GM12878 (cell line): ENCODE measurements at regions of chr12 and their contacts with region 1.

Region 1: GRCh38 chr12:28190321-28191050 is at the start of gene CCDC91:
- DNase-seq: peak; percentile 60
- ATAC-seq: peak; percentile 94
- H3K4me3 ChIP-seq: peak within 1 kb of the TSS; percentile 76
- H3K27ac ChIP-seq: peak within 1 kb of the TSS; percentile 95
- H3K4me1 ChIP-seq: peaks cover 4% of the 10 kb centered on the region; the same call in 1 of the 2 replicates
- H3K27me3 ChIP-seq: no peaks in the 10 kb centered on the region
- CTCF ChIP-seq: no peak
- EP300 ChIP-seq: no peak
- POLR2A ChIP-seq: peak; percentile 94
- RAD21 ChIP-seq: no peak
- polyA plus RNA-seq, gene CCDC91: 6.1 to 10.3 TPM

Region 2: DNA sequence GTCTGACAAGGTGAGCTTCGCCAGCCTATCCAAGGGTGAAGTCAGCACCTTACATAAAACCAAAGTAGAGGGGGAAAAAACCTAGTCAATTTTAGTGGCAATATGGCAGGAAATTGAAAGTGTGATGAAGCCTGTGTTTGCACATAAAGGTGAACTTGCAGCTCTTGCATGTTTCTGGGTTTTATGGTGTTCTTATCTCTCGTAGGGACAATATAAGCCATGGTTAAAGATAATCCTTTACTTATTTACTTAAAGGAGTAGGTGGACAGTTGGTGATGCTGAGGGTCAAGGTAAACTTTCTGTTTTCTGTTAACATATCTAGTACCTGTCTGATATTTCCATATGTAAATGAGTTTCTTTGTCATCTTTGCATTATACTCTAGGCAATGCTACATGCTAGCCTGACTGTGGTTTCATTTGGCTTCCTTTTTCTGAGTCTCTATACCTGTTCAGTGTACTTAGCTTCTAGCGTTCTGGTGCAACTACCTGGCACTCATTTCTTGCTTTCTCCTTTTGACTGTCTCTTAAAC is 32.6 kb after region 1 on chr12:
- CTCF ChIA-PET with region 1: interaction called, 3 read pairs
- POLR2A ChIA-PET with region 1: interaction called, 7 read pairs
- RAD21 ChIA-PET with region 1: no interaction called
- SMC1A ChIA-PET with region 1: interaction called, 3 read pairs
- in situ Hi-C with region 1: no loop called
- intact Hi-C with region 1: loop called (anchors 2 kb)
- DNase-seq: no peak
- ATAC-seq: peak; percentile 93
- H3K4me3 ChIP-seq: 0 out of 2 replicates have a peak overlapping the region, but pooled peaks have one; percentile 5
- H3K27ac ChIP-seq: no peak overlapping the region; the same call in 1 of the 2 replicates
- H3K4me1 ChIP-seq: peaks cover 19% of the 10 kb centered on the region; the same call in 1 of the 2 replicates
- H3K27me3 ChIP-seq: no peaks in the 10 kb centered on the region
- CTCF ChIP-seq: no peak
- EP300 ChIP-seq: no peak
- POLR2A ChIP-seq: no peak
- RAD21 ChIP-seq: no peak

Region 3: DNA sequence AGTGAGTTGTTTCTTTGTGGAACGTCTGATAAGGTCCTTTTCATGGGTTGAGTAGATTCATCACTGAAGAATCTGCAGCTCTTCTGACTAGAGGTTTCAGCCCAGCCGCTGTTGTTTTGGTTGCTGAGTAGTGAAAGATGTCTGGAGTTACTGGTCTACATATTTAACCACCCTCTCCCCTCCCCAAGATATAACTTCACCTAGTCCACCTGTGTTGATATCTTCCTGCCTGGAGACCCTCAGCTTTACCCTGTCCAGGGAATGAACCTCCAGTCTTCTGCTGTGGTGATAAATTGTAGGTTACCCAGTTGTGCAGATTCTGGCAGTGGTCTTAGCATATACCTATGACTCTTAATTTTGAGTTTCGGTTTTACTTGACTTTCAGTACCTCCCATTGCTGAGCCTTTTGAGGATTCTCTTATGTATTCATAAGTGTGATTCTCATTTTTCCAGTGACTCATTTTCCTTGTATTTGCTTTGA is 62.7 kb after region 1 on chr12:
- CTCF ChIA-PET with region 1: interaction called, 4 read pairs
- POLR2A ChIA-PET with region 1: interaction called, 4 read pairs
- RAD21 ChIA-PET with region 1: interaction called, 7 read pairs
- SMC1A ChIA-PET with region 1: no interaction called
- in situ Hi-C with region 1: no loop called
- intact Hi-C with region 1: loop called (anchors 2 kb)
- DNase-seq: peak; percentile 49
- ATAC-seq: peak; percentile 96
- H3K4me3 ChIP-seq: peak overlapping the region; percentile 35
- H3K27ac ChIP-seq: peak overlapping the region; percentile 62
- H3K4me1 ChIP-seq: peaks cover 6% of the 10 kb centered on the region
- H3K27me3 ChIP-seq: no peaks in the 10 kb centered on the region
- CTCF ChIP-seq: no peak
- EP300 ChIP-seq: no peak
- POLR2A ChIP-seq: no peak
- RAD21 ChIP-seq: no peak